Transverse colon (tissue), 4 donors: ENCODE measurements at regions of chr9 and their contacts with region 1.

Region 1: DNA sequence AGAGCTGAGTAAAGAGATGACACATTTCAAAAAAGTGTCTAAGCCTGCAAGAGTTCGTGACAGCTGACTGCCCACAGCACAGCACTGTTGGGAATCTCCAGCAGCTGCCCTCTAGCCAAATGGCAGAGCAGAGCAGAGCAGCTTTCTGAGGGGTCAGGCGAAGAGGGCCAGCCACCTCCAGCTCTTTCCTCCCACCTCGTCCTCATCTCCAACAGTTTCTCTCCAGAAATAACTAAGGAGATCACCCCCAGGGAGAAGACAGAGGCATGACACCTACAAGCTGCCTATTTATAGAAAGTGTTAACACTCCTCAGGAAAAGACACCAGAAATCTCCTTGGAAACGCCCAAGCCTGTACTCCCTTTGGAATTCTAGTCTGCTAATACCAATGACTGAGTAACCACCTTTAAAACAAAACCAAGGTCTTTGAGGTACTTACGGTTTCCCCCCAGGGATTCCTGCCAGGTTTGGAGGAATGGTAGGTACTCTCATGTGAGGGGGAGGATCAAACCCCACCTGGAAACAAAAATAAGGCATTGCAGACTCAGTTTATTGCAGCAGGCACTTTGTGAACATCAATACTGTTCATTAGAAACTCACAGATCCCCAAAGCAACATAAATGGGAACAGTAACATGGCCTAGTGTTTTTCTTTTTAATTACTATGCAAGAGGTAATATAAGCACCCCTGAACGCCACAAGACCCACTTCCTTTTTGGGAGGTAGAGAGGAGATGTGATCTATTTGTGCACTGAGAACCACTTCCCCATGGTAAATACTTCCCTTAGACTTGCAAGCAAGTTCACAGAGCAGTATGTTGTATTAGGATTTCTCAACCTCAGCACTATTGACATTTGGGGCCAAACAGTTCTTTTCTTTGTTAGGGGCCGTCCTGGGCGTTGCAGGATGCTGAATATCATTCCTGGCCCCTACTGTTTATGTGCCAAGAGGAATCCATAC is 79.3 kb downstream of the TLE1 start:
- DNase-seq: no peak
- H3K4me3 ChIP-seq: no peak overlapping the region
- H3K27ac ChIP-seq: peak overlapping the region in 2 of 4 donors; percentile 9 to 15
- H3K4me1 ChIP-seq: peaks cover 0 to 6% (median 5%) of the 10 kb centered on the region in 4 donors
- H3K27me3 ChIP-seq: no peaks in the 10 kb centered on the region
- CTCF ChIP-seq: no peak
- EP300 ChIP-seq: no peak
- POLR2A ChIP-seq: no peak

Region 2: DNA sequence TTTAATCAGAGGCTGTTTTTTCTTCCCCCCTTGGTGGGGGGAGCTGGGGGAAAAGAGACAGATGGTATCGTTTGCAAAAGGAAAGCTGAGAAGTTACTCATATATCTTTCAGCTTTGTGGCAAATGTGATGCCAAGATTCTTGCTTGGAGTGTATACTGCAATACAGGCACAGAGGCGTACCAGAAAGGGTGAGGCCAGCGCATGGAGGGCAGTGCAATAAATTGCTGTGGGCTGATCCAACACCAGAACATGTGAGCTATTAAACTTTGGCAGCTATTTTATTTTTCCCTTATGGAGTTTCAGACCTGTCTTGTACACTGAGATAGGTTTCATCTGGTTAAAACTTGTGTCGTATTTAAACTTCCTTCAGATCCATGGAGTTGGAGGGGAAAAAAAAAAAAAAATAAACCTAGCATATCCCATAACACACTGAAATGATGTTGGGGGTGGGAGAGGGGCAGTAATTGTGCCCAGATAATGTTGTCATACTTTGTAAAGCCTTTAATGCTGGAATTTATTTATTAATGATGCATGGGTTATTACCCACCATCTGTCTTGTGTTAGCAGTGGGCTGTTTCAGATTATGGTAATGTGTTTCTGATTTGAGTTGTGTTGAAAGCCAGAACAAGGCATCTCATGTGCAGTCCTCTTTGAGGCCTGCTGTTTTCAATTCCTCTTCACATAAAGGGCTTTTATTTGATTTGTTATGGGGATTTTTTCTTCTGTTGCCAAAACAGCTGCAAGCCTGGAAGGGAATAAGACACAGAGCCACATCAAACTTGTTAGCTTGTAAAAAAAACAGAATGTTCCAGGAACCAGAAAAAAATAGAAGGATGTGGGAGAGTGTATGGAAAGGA is 812.0 kb before region 1 on chr9:
- in situ Hi-C with region 1: no loop called
- intact Hi-C with region 1: loop called (anchors 5 kb)
- DNase-seq: peak; percentile 15
- H3K4me3 ChIP-seq: no peak overlapping the region
- H3K27ac ChIP-seq: peak overlapping the region; percentile 40 to 82 (median 75)
- H3K4me1 ChIP-seq: peaks cover 0 to 20% (median 6%) of the 10 kb centered on the region in 4 donors
- H3K27me3 ChIP-seq: no peaks in the 10 kb centered on the region
- CTCF ChIP-seq: no peak
- EP300 ChIP-seq: peak; percentile 31
- POLR2A ChIP-seq: no peak

Region 3: GRCh38 chr9:81558091-81558830 is 51.8 kb before region 1 on chr9:
- in situ Hi-C with region 1: loop called in 1 of 4 experiments (anchors 10 kb)
- intact Hi-C with region 1: no loop called
- DNase-seq: no peak
- H3K4me3 ChIP-seq: no peak overlapping the region
- H3K27ac ChIP-seq: peak overlapping the region in 3 of 4 donors; percentile 30 to 44 (median 40)
- H3K4me1 ChIP-seq: peaks cover 0 to 13% (median 0%) of the 10 kb centered on the region in 4 donors
- H3K27me3 ChIP-seq: no peaks in the 10 kb centered on the region
- CTCF ChIP-seq: no peak
- EP300 ChIP-seq: no peak
- POLR2A ChIP-seq: no peak

Region 4: DNA sequence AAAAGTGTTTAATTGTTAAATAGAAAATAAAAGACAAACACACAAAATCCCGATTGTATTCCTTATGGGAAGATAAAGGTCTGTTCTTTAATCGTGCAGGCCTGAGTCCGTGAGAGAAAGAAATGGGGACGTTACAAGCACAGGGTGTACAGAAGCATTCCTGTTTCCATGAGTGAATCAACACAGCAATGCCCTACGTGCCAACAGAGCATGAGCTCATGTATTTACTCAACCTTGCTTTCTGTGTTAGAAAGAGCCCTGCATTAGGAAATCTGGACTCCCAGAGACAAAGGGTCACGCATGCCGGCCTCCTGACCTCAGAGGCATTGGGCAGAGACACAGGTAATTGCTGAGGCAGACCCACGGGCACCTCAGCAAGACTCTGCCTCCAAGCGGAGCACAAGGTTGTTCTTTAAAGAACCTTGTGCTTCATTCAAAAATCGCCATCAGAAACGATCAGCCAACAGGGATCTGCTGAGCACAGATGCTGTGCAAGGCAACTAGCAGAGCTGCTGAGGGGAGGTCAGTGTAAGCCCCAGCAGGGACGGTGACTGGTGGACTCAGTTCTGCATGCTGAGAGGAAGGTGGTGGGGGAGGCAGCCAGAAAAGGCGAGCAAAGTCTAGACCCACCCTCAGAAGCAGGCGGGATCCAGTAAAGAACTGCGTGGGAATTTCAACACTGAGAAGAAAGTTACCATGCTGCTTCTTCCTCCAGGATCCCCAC is 21.8 kb before region 1 on chr9:
- in situ Hi-C with region 1: no loop called
- intact Hi-C with region 1: no loop called
- DNase-seq: peak; percentile 44
- H3K4me3 ChIP-seq: peak overlapping the region in 1 of 4 donors; percentile 11
- H3K27ac ChIP-seq: peak overlapping the region; percentile 73 to 80 (median 76)
- H3K4me1 ChIP-seq: peaks cover 4 to 36% (median 25%) of the 10 kb centered on the region in 4 donors
- H3K27me3 ChIP-seq: no peaks in the 10 kb centered on the region
- CTCF ChIP-seq: no peak
- EP300 ChIP-seq: peak; percentile 35
- POLR2A ChIP-seq: peak; percentile 6

Region 5: GRCh38 chr9:81724242-81724889 is 114.3 kb after region 1 on chr9:
- in situ Hi-C with region 1: loop called in 1 of 4 experiments (anchors 25 kb)
- intact Hi-C with region 1: no loop called
- DNase-seq: no peak
- H3K4me3 ChIP-seq: no peak overlapping the region
- H3K27ac ChIP-seq: no peak overlapping the region
- H3K4me1 ChIP-seq: peaks cover 0 to 13% (median 5%) of the 10 kb centered on the region in 4 donors
- H3K27me3 ChIP-seq: no peaks in the 10 kb centered on the region
- CTCF ChIP-seq: no peak
- EP300 ChIP-seq: no peak
- POLR2A ChIP-seq: no peak

Region 6: DNA sequence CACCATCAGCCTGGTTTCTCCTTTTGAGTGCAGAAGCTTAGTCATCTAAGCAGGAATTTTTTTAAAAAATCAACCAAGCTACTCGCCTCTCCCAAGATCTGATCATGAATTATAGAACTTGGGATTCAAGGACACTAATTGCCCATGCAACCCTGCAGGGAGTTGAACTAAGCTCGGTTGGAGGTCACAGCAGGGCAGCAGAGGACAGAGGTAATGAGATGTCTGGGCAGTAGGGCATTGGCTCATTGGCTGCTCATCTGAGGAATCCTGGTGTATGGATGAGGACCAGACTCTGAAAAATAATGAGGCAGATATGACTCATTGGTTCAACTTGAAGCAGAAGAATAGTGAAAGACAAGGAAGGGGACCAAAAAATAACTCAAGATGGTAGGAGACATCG is 191.1 kb after region 1 on chr9:
- in situ Hi-C with region 1: no loop called
- intact Hi-C with region 1: no loop called
- DNase-seq: no peak
- H3K4me3 ChIP-seq: no peak overlapping the region
- H3K27ac ChIP-seq: no peak overlapping the region
- H3K4me1 ChIP-seq: peaks cover 0 to 7% (median 3%) of the 10 kb centered on the region in 4 donors
- H3K27me3 ChIP-seq: no peaks in the 10 kb centered on the region
- CTCF ChIP-seq: no peak
- EP300 ChIP-seq: no peak
- POLR2A ChIP-seq: no peak

Region 7: GRCh38 chr9:81894891-81895290 is 284.8 kb after region 1 on chr9:
- in situ Hi-C with region 1: no loop called
- intact Hi-C with region 1: no loop called
- DNase-seq: no peak
- H3K4me3 ChIP-seq: no peak overlapping the region
- H3K27ac ChIP-seq: no peak overlapping the region
- H3K4me1 ChIP-seq: peaks cover 0 to 20% (median 6%) of the 10 kb centered on the region in 4 donors
- H3K27me3 ChIP-seq: no peaks in the 10 kb centered on the region
- CTCF ChIP-seq: no peak
- EP300 ChIP-seq: no peak
- POLR2A ChIP-seq: no peak